ENCODE measurements at regions of chr1 and their contacts with region 1.

Region 1: DNA sequence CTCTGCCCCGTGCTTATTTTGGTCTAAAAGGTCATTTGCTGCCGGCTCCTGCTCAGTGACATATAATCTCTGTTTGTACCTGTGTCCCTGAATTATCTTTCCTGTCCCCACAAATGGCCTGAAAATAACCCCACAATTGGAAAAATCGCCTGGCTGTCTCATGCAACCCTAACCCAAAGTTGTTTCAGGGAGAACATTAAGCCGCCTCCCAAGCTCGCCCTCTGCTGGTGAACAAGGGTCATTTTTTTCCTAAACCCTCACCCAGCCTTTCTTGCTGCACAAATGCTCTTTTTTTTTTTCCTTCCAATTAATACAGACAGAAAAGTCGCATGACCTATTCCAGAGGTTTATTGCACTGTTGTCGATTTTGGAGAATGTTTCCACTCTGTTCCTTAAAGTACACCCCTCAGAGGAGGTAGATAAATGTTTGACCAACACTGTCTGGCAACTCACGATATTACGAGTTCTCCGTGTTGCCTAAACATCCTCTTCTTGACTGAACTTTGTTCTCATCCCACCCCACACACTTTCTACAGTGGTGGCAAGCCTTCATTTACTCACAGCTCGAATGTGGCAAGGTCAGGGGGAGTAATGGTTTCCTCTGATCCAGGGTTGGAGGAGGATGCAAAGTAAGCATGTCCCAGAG is 148.7 kb downstream of the ZZZ3 start:
- DNase-seq: peak; percentile 67
- ATAC-seq: no peak
- H3K4me3 Mint-ChIP-seq: no peak overlapping the region
- H3K27ac Mint-ChIP-seq: peak overlapping the region; percentile 34
- H3K4me1 Mint-ChIP-seq: peaks cover 2% of the 10 kb centered on the region
- H3K27me3 Mint-ChIP-seq: no peaks in the 10 kb centered on the region
- CTCF ChIP-seq: peak; percentile 92

Region 2: GRCh38 chr1:77143529-77144121 is 390.2 kb before region 1 on chr1:
- CTCF ChIA-PET with region 1: interaction called, 15 read pairs
- POLR2A ChIA-PET with region 1: no interaction called
- intact Hi-C with region 1: loop called (anchors 5 kb)
- DNase-seq: no peak
- ATAC-seq: no peak
- H3K4me3 Mint-ChIP-seq: no peak overlapping the region
- H3K27ac Mint-ChIP-seq: no peak overlapping the region
- H3K4me1 Mint-ChIP-seq: peaks cover 3% of the 10 kb centered on the region
- H3K27me3 Mint-ChIP-seq: no peaks in the 10 kb centered on the region
- CTCF ChIP-seq: peak; percentile 56

Region 3: DNA sequence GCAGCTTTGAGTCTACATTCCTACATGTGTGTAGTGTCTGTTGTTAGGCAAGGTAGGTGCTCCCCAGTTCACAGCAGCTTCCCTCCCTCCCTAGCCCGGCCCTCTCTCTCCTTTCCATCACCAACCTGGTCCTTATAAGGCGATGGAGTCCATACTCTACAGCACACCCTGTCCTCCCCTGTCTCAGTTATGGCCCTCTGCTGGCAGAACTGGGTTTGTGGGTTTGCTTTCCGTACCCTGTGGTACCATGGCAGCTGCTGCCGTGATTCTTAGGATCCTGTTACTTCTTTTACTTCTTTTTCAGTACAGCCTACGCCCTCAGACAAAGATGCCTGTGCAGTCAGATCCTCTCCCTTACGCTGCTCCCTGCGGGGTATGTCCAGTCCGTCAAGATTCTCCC is 220.3 kb before region 1 on chr1:
- CTCF ChIA-PET with region 1: no interaction called
- POLR2A ChIA-PET with region 1: no interaction called
- intact Hi-C with region 1: no loop called
- DNase-seq: peak; percentile 43
- ATAC-seq: peak; percentile 70
- H3K4me3 Mint-ChIP-seq: no peak overlapping the region
- H3K27ac Mint-ChIP-seq: peak overlapping the region; percentile 10
- H3K4me1 Mint-ChIP-seq: peaks cover 31% of the 10 kb centered on the region
- H3K27me3 Mint-ChIP-seq: no peaks in the 10 kb centered on the region
- CTCF ChIP-seq: peak; percentile 19

Region 4: DNA sequence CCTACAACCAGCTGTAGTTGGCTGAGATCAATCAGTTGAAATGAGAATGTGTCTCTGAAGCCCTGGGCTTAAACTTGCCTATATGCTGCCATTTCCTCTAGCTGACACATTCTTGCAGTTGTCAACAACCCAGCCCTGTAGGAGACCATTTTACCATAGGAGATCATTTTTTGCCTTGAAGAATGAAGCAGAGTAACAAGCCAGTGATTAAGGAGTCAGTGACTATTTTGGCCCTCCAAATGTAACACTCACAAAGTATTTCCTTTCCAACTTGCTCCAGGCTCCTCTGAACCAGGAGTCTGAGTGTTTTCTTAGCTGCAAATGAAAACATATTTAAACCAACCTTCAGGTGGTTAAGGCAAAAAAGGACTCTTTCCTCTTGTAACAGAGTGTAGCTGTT is 34.9 kb before region 1 on chr1:
- CTCF ChIA-PET with region 1: no interaction called
- POLR2A ChIA-PET with region 1: no interaction called
- intact Hi-C with region 1: no loop called
- DNase-seq: no peak
- ATAC-seq: no peak
- H3K4me3 Mint-ChIP-seq: no peak overlapping the region
- H3K27ac Mint-ChIP-seq: no peak overlapping the region
- H3K4me1 Mint-ChIP-seq: peaks cover 5% of the 10 kb centered on the region
- H3K27me3 Mint-ChIP-seq: no peaks in the 10 kb centered on the region
- CTCF ChIP-seq: no peak

Region 5: GRCh38 chr1:77545970-77546369 is 12.2 kb after region 1 on chr1:
- CTCF ChIA-PET with region 1: interaction called, 12 read pairs
- POLR2A ChIA-PET with region 1: no interaction called
- intact Hi-C with region 1: no loop called
- DNase-seq: no peak
- ATAC-seq: no peak
- H3K4me3 Mint-ChIP-seq: no peak overlapping the region
- H3K27ac Mint-ChIP-seq: no peak overlapping the region
- H3K4me1 Mint-ChIP-seq: no peaks in the 10 kb centered on the region
- H3K27me3 Mint-ChIP-seq: no peaks in the 10 kb centered on the region
- CTCF ChIP-seq: no peak

Region 6: DNA sequence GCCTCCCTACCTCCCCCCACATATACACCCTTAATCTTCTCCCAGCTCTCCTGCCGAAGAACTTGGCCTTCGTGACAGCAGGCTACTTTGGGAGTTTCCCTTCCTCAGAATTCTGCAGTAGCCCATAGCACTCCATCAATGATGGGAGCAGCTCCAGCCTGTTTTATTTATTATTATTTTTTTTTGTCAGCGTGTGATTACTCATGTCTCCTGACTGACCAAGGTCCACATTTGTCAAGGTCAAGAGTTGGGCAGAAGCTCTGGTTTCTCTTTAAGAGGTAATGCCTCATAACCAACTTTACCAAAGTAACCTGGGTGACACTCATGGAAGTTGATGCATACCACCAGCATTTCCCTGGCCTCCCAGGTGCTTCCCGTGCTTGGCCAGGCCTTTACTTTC is 23.3 kb after region 1 on chr1:
- CTCF ChIA-PET with region 1: interaction called, 12 read pairs
- POLR2A ChIA-PET with region 1: no interaction called
- intact Hi-C with region 1: no loop called
- DNase-seq: no peak
- ATAC-seq: no peak
- H3K4me3 Mint-ChIP-seq: no peak overlapping the region
- H3K27ac Mint-ChIP-seq: no peak overlapping the region
- H3K4me1 Mint-ChIP-seq: no peaks in the 10 kb centered on the region
- H3K27me3 Mint-ChIP-seq: no peaks in the 10 kb centered on the region
- CTCF ChIP-seq: no peak

Measured in activated CD8-positive, alpha-beta T cell treated with anti-CD3 and anti-CD28 coated beads for 36 hours (primary cell).